ENCODE measurements at regions of chr1 and their contacts with region 1.

Region 1: DNA sequence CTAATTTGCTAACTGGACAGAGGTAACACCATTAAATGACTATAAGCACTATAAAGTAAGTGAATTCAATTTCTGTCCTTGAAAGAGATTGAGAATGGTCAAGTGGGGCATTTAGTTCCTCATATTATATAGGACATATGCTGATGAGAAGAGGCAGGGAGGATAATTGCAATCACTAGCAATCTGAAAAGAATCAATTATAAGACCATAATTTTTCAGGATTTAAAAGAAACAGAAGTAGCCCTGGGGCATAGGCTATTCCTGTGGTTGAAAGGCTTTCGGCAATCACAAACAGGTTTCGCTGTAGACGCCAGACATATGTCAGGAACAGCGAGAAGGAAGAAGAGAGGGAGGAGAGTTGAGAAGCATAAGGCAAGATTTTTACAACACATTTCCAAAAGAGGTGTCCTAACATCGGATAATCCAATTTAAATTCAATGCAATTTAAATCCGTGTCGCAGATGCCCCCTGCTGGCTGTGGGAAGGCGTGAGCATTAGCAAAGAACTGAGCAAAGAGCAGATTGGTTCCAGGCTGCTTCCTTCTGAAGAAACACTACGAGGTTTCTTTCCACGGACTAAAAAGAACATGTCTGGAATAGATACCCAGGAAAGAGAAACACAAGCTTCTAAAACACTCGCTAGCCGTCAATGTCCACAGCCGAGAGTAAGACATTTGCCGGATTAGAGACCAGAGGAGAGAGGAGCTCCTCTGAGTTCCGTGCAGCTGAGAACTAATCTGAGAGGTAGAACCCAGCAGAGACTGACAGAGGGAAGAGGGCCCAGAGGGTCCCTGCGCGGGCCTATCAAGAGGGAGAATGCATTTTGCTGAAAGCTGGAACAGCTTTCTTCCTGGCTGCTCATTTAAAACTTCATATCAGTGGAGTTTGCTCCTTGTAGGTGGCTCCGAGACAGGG is 27.9 kb downstream of the RGS5 start:
- DNase-seq: peak; percentile 23 to 67 (median 66)
- H3K4me3 ChIP-seq: no peak overlapping the region
- H3K27ac ChIP-seq: no peak overlapping the region
- H3K4me1 ChIP-seq: peaks cover 1% of the 10 kb centered on the region
- H3K27me3 ChIP-seq: no peaks in the 10 kb centered on the region
- CTCF ChIP-seq: peak in 2 of 3 donors; percentile 34 to 49
- EP300 ChIP-seq: no peak
- POLR2A ChIP-seq: no peak

Region 2: GRCh38 chr1:162854245-162854882 is 320.4 kb before region 1 on chr1:
- intact Hi-C with region 1: loop called in 1 of 4 experiments (anchors 5 kb)
- DNase-seq: peak in 4 of 5 donors; percentile 42 to 57 (median 50)
- H3K4me3 ChIP-seq: no peak overlapping the region
- H3K27ac ChIP-seq: no peak overlapping the region
- H3K4me1 ChIP-seq: no peaks in the 10 kb centered on the region
- H3K27me3 ChIP-seq: no peaks in the 10 kb centered on the region
- CTCF ChIP-seq: peak; percentile 21 to 46 (median 34)
- EP300 ChIP-seq: no peak
- POLR2A ChIP-seq: no peak